HCT116 (cell line): ENCODE measurements at regions of chr2 and their contacts with region 1.

Region 1: GRCh38 chr2:71460595-71461303 is 7.4 kb downstream of the DYSF start:
- DNase-seq: peak; percentile 32
- ATAC-seq: peak; percentile 78
- H3K4me3 ChIP-seq: no peak overlapping the region
- H3K27ac ChIP-seq: no peak overlapping the region
- H3K4me1 ChIP-seq: peaks cover 0 to 12% of the 10 kb centered on the region in 2 experiments; a peak in 1 of 4 replicates
- H3K27me3 ChIP-seq: no peaks in the 10 kb centered on the region
- CTCF ChIP-seq: peak; percentile 62 to 79 (median 78)
- POLR2A ChIP-seq: no peak
- RAD21 ChIP-seq: peak; percentile 79

Region 2: DNA sequence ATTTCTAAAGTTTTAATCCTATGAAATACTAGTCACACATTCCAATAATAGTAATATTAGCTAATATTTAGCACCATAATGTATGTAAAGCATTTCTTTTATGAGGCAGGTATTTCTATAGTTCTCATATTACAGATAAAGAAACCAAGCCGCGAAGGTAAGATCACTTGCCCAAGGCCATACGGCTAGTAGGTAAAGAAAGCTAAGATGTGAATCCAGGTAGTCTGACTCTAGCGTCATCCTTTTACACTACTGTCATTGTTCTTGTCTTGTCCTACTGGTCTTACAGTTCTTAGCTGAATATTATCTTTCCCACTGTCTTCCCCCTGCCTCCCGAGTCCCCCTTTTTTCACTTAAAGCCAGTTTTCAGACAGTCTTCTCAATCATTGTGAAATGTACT is 13.5 kb before region 1 on chr2:
- CTCF ChIA-PET with region 1: interaction called, 10 read pairs
- POLR2A ChIA-PET with region 1: no interaction called
- RAD21 ChIA-PET with region 1: no interaction called
- intact Hi-C with region 1: no loop called
- DNase-seq: no peak
- ATAC-seq: no peak
- H3K4me3 ChIP-seq: no peak overlapping the region
- H3K27ac ChIP-seq: no peak overlapping the region
- H3K4me1 ChIP-seq: peaks cover 0 to 3% of the 10 kb centered on the region in 2 experiments; a peak in 1 of 4 replicates
- H3K27me3 ChIP-seq: no peaks in the 10 kb centered on the region
- CTCF ChIP-seq: no peak
- POLR2A ChIP-seq: no peak
- RAD21 ChIP-seq: no peak

Region 3: DNA sequence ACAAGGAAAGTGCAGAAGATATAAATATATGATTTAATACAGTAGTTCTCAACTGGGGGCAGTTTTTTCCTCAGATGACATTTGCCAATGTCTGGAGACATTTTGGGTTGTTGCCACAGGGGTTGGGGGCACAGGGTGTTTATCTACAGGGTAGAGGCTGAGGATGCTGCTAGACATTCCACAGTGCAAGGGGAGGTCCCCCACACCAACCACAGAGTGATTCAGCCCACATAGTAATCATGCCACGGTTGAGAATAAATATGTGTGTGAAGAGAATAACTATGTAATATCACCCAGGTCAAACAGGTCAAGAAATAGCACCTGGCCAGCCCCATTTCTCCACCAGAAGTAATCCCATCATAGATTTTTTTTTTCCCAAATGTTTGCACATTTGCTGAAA is 10.5 kb after region 1 on chr2:
- CTCF ChIA-PET with region 1: interaction called, 22 read pairs
- POLR2A ChIA-PET with region 1: no interaction called
- RAD21 ChIA-PET with region 1: interaction called in 1 of 2 experiments, 3 read pairs
- intact Hi-C with region 1: no loop called
- DNase-seq: no peak
- ATAC-seq: no peak
- H3K4me3 ChIP-seq: no peak overlapping the region
- H3K27ac ChIP-seq: no peak overlapping the region
- H3K4me1 ChIP-seq: peaks cover 0 to 16% of the 10 kb centered on the region in 2 experiments; a peak in 3 of 4 replicates
- H3K27me3 ChIP-seq: peaks cover 3% of the 10 kb centered on the region; the same call in 1 of the 2 replicates
- CTCF ChIP-seq: no peak
- POLR2A ChIP-seq: no peak
- RAD21 ChIP-seq: no peak

Region 4: GRCh38 chr2:71558300-71559051 is 97.7 kb after region 1 on chr2:
- CTCF ChIA-PET with region 1: no interaction called
- POLR2A ChIA-PET with region 1: no interaction called
- RAD21 ChIA-PET with region 1: no interaction called
- intact Hi-C with region 1: no loop called
- DNase-seq: no peak
- ATAC-seq: peak; percentile 57
- H3K4me3 ChIP-seq: no peak overlapping the region
- H3K27ac ChIP-seq: no peak overlapping the region
- H3K4me1 ChIP-seq: peaks cover 0 to 11% of the 10 kb centered on the region in 2 experiments; a peak in 2 of 4 replicates
- H3K27me3 ChIP-seq: no peaks in the 10 kb centered on the region
- CTCF ChIP-seq: no peak
- POLR2A ChIP-seq: no peak
- RAD21 ChIP-seq: no peak